Dorsolateral prefrontal cortex (tissue), 120 donors: ENCODE measurements at regions of chr4 and their contacts with region 1.

Region 1: DNA sequence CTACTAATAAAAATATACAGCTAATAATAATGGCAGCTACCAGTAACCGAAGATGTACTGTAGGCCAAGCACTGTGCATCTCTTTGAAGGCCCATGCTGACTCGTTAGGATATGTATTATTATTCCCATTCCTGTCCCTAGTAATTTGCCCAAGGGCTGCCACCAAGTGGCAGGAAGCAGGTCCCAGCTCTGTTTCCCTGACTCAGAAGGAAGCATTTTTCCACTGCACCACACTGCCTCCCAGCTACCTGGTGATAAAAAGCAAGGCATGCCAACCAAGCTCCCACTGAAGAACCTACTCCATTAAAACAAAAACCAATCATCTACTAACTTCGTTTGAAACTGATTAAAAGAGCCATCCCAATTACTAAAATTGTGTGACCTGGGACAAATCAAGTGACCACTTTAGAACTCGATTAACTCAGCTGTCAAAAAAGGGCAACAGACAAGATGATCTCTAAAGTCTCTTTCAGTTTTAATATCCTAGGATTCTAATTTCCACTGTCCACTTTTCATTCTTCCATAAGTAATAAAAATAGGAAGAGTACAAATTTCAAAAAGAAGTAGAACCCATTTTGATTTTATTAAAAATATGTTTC is 24.3 kb upstream of the PGM2 start:
- DNase-seq: peak in 7 of 10 donors; percentile 48 to 58 (median 49)
- H3K4me3 ChIP-seq: no peak overlapping the region
- H3K27ac ChIP-seq: no peak overlapping the region
- H3K27me3 ChIP-seq: peaks cover 0 to 4% (median 0%) of the 10 kb centered on the region in 45 donors
- CTCF ChIP-seq: peak; percentile 18 to 84 (median 60)

Region 2: DNA sequence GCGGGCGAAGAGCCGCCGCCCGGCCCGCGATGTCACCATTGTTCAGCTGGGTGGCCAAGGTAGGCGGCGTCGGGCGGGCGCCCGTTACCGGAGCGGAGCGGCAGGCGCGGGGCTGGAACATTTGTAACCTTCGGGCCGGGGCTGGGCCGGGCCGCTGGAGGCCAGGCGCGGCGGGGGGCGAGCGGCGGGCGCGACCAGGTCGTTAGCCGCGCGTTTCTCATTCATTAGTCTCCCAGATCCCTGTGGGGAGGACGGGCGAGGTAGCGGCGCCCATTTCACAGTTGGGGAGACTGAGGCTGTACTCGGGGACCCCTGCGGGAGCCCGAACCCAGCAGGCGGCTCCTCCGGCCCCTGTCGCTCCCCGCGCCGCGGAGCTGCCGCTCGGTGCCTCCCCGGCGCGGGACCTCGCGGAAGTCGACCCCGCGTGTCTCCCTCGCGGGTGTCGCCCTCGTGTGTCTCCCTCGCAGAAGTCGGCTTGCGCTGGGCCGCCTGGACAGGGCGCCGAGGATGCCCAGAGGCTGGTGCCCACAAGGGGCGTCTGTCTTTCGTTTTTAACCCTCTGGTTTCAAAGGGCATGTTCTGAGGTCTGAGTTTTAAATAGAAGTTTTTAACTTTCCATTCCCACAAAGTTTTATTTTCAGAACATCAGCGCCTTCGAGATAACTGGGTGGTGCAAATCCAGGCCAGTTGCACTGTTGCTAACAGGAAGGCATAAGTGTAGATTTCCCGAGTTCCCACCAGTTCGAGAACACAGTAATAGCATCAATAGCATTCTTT is 175.5 kb after region 1 on chr4:
- intact Hi-C with region 1: loop called in 1 of 2 experiments (anchors 5 kb)
- DNase-seq: peak; percentile 45 to 80 (median 66)
- H3K4me3 ChIP-seq: peak overlapping the region; percentile 56 to 89 (median 80)
- H3K27ac ChIP-seq: peak overlapping the region; percentile 5 to 95 (median 86)
- H3K27me3 ChIP-seq: no peaks in the 10 kb centered on the region
- CTCF ChIP-seq: peak in 54 of 56 donors; percentile 31 to 79 (median 64)

Region 3: GRCh38 chr4:38034986-38035882 is 233.1 kb after region 1 on chr4:
- intact Hi-C with region 1: loop called (anchors 2 to 5 kb)
- DNase-seq: peak in 2 of 10 donors; percentile 11 to 21
- H3K4me3 ChIP-seq: no peak overlapping the region
- H3K27ac ChIP-seq: no peak overlapping the region
- H3K27me3 ChIP-seq: no peaks in the 10 kb centered on the region
- CTCF ChIP-seq: peak; percentile 48 to 84 (median 71)